Activated T-helper 2 cell treated with anti-CD3 and anti-CD28 coated beads, Interferon-gamma antibody, Interleukin-2, Interleukin-4, amounts not matched to agents 10 μg/mL and 5 μg/mL and 100 μg/mL, durations not matched to agents 14 hours and 24 hours and 36 hours (primary cell): ENCODE measurements at regions of chr19 and their contacts with region 1.

Region 1: DNA sequence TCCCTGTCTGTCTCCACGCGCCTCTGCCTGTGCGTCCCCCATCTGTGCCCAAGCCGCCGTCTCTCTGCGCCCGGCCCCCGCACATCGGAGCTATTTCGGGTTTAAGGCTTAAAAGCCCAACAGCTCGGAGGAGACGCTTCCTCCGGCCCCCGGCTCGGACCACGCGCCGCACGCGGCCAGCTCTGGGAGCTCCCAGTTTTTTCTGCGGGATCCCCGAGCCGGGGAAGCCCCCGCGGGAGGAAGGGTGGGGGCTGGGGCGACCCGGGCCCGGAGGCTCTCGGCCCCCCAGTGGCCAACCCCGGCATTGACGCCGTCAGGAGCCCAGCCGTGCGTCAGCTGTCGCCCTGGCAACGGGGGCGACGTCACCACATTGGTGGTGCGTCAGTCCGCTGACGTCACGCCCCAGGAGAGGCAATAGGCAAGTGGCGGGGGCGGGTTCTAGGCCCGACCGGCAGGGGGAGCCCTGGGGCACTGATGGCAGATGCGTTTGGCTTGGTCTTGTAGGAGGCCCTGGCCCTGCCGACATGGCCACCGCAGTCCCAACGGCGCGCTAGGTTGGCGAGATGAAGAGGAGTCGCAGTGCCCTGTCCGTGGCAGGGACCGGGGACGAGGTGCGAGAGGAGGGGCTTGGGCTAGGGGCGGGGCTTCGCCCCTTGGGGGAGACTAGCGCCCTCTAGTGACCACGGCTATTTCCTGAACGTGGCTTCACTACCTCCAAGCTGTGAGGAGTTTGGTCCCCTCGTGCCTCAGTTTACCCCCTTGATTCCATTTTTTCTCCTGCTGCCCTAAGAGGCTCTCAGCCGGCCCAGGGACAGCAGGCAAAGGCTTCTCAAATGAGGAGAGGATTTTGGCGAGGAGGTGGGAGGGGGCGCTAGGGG is 3.7 kb upstream of the PDE4A start:
- DNase-seq: peak; percentile 94
- H3K4me3 Mint-ChIP-seq: peak overlapping the region; percentile 80
- H3K27ac Mint-ChIP-seq: peak overlapping the region; percentile 84
- H3K4me1 Mint-ChIP-seq: peaks cover 45% of the 10 kb centered on the region
- H3K27me3 Mint-ChIP-seq: no peaks in the 10 kb centered on the region

Region 2: GRCh38 chr19:10431943-10432735 is 15.5 kb after region 1 on chr19:
- intact Hi-C with region 1: loop called (anchors 1 kb)
- DNase-seq: no peak
- H3K4me3 Mint-ChIP-seq: peak overlapping the region; percentile 88
- H3K27ac Mint-ChIP-seq: peak overlapping the region; percentile 94
- H3K4me1 Mint-ChIP-seq: peaks cover 62% of the 10 kb centered on the region
- H3K27me3 Mint-ChIP-seq: peaks cover 1% of the 10 kb centered on the region